ENCODE measurements at regions of chr2 and their contacts with region 1.

Region 1: GRCh38 chr2:70142590-70143313 is 48.1 kb downstream of the C2orf42 start:
- DNase-seq: peak; percentile 100
- ATAC-seq: peak; percentile 69
- H3K4me3 Mint-ChIP-seq: peak overlapping the region; percentile 89
- H3K27ac Mint-ChIP-seq: peak overlapping the region; percentile 98
- H3K4me1 Mint-ChIP-seq: peaks cover 52% of the 10 kb centered on the region
- H3K27me3 Mint-ChIP-seq: no peaks in the 10 kb centered on the region

Region 2: DNA sequence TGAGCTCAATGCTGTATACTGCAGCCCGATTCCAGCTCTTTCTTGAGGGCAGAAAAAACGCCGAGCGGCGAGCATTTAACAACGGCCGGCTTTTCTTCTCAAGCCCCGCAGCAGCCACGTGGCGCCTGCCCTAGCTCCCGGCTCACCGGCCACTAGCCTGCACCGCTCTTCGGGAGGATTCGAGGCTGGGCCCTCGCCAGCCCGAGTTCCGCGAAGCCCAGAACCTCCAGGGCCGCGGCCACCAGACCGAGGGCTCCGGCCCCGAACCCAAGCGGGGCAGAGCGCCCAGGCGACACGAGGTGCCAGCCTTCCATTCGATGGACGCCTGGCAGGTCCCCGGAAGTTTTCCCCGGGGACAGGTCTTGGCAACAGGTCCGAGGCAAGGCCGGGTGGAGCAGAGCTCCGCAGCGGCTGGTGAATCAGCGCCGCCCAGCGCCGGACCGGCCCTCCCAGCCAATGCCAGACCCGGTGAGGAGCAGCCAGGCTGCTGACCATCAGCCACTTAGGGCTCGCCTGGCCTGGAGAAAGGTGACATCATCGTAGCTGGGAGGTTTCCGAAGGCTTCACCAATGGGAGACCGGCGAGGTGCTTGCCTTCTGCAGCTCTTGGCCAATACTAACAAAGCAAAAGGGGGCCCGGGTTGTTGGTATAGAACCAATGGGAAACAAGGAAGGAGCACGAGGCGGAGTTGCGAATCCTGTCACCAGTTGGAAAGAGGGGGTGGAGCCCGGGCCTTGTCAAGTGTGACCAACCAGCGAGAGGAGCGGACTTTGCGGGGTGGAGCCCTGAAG is 228.4 kb before region 1 on chr2:
- POLR2A ChIA-PET with region 1: interaction called, 77 read pairs
- DNase-seq: no peak
- ATAC-seq: peak; percentile 92
- H3K4me3 Mint-ChIP-seq: peak overlapping the region; percentile 84
- H3K27ac Mint-ChIP-seq: peak overlapping the region; percentile 71
- H3K4me1 Mint-ChIP-seq: peaks cover 27% of the 10 kb centered on the region
- H3K27me3 Mint-ChIP-seq: no peaks in the 10 kb centered on the region

Region 3: GRCh38 chr2:70086838-70087701 is 55.7 kb before region 1 on chr2 and contains the start of gene PCBP1:
- POLR2A ChIA-PET with region 1: interaction called, 444 read pairs
- DNase-seq: peak; percentile 99
- ATAC-seq: peak; percentile 34
- H3K4me3 Mint-ChIP-seq: peak within 1 kb of the TSS; percentile 96
- H3K27ac Mint-ChIP-seq: peak within 1 kb of the TSS; percentile 98
- H3K4me1 Mint-ChIP-seq: peaks cover 47% of the 10 kb centered on the region
- H3K27me3 Mint-ChIP-seq: no peaks in the 10 kb centered on the region
- total RNA-seq, gene PCBP1: 459 to 467 TPM

Region 4: DNA sequence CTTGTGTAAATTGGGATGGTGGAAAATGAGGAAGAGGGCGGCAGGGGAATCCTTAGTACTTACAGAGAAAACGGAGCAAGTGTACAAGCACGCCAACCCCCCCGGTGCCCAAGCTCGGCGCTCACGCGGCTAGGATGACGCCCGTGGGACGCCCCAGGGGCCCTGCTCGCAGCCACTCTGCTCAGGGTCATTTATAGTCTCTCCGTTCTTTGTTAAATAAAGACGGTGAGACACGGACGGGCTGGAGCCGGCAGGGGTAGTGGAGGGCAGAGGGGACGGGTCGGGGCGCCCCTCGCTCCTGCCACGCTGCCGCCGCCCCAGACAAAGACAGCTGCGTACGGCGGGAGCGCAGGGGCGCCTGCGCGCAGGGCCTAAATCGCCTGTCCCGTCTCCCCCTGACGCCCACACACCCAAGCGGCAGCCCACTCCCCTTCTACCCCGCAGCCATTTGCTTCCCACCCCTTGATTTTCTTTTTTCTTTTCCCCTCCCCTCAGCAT is 17.7 kb before region 1 on chr2:
- POLR2A ChIA-PET with region 1: interaction called, 160 read pairs
- DNase-seq: peak; percentile 76
- ATAC-seq: peak; percentile 62
- H3K4me3 Mint-ChIP-seq: peak overlapping the region; percentile 85
- H3K27ac Mint-ChIP-seq: peak overlapping the region; percentile 94
- H3K4me1 Mint-ChIP-seq: peaks cover 54% of the 10 kb centered on the region
- H3K27me3 Mint-ChIP-seq: no peaks in the 10 kb centered on the region

Region 5: DNA sequence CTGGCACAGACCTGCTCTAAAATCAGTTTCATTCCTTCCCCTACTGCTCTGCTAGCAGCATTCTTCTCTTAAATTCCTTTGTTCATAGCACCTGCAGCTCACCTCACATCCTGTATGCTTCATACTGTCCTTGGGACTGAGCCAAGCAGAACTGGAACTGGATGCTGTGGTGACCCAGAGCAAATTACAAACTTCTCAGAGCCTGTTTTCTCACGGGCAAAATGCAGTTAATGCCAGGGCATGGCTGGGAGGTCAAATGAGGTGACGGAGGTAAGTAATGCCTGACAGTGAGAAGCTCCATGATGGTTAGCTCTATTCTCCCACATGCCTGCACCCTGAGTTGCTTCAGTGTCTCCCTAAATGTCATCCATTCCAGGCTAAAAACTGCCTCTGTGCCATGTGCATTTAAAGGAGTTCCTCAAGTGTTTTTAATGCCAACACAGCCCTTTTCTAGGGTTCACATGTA is 18.4 kb after region 1 on chr2:
- POLR2A ChIA-PET with region 1: no interaction called
- DNase-seq: no peak
- ATAC-seq: no peak
- H3K4me3 Mint-ChIP-seq: no peak overlapping the region
- H3K27ac Mint-ChIP-seq: no peak overlapping the region
- H3K4me1 Mint-ChIP-seq: peaks cover 4% of the 10 kb centered on the region
- H3K27me3 Mint-ChIP-seq: no peaks in the 10 kb centered on the region

Region 6: DNA sequence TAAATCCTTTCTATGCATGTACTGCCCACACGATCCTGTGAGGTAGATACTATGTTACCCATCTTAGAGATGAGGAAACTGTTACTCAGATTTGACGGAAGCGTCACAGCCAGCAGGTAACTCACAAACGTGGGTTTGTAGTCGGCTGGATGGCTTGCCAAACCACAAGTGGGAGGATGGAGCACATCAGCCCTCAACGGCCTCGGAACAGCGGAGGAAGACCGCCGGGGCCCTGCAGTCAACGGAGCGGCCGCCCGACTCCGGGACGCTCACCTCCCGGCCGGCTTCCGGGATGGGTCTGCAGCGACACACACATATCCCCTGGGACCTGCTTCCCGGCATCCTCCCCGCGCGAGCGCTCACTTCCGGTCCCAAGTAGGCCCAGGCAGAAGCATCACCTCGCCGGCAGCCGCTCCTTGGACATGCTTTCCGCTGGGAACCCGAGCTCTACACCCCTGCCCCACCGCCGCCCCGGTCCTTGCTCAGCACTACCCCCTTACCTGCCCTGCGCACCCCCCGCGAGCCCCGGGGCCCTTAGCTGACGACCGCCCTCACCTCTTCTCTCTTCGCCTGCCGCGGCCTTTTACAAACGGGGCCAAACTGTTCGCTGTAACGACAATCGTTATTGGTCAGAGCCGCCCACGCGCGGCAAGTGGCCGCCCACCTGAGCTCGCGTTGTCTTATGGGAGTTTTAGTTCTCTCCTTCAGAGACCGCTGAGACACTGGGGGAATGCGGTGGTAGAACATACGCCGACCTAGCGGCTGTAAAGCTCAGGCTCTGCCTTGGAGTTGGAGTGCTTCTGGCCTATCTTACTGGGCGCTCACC is 47.9 kb after region 1 on chr2 and contains the start of gene C2orf42:
- POLR2A ChIA-PET with region 1: interaction called, 18 read pairs
- DNase-seq: peak; percentile 93
- ATAC-seq: peak; percentile 85
- H3K4me3 Mint-ChIP-seq: peak within 1 kb of the TSS; percentile 95
- H3K27ac Mint-ChIP-seq: peak within 1 kb of the TSS; percentile 99
- H3K4me1 Mint-ChIP-seq: peaks cover 14% of the 10 kb centered on the region
- H3K27me3 Mint-ChIP-seq: peaks cover 2% of the 10 kb centered on the region
- total RNA-seq, gene C2orf42: 30.9 to 33.8 TPM